ENCODE measurements at regions of chr5 and their contacts with region 1.

Region 1: DNA sequence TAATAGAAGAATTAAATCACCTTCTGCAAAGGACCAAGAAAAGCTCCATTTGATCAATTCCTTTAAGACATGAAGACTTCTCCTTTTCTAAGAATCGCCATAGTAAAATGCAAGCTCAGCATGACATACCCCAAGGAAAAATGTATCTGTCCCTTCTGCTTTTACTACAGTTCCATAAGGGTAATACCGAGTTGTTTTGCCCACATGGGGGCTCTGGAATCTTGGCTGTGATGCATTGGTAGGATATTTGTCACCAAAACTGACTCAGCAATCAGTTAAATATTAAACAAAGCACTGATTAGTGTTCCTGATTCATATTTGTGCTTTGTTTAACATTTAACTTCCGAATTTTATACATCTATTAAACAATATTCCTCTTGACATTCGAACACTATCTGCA is 24.3 kb upstream of the KCNIP1 start:
- DNase-seq: peak; percentile 71
- H3K4me3 Mint-ChIP-seq: no peak overlapping the region
- H3K27ac Mint-ChIP-seq: peak overlapping the region; percentile 56
- H3K4me1 Mint-ChIP-seq: peaks cover 44% of the 10 kb centered on the region
- H3K27me3 Mint-ChIP-seq: no peaks in the 10 kb centered on the region
- CTCF ChIP-seq: no peak

Region 2: GRCh38 chr5:169778622-169779596 is 700.6 kb before region 1 on chr5:
- CTCF ChIA-PET with region 1: no interaction called
- intact Hi-C with region 1: no loop called
- DNase-seq: no peak
- H3K4me3 Mint-ChIP-seq: no peak overlapping the region
- H3K27ac Mint-ChIP-seq: no peak overlapping the region
- H3K4me1 Mint-ChIP-seq: no peaks in the 10 kb centered on the region
- H3K27me3 Mint-ChIP-seq: peaks cover 76% of the 10 kb centered on the region
- CTCF ChIP-seq: no peak

Region 3: GRCh38 chr5:170302653-170303501 is 176.6 kb before region 1 on chr5:
- CTCF ChIA-PET with region 1: no interaction called
- intact Hi-C with region 1: no loop called
- DNase-seq: no peak
- H3K4me3 Mint-ChIP-seq: no peak overlapping the region
- H3K27ac Mint-ChIP-seq: no peak overlapping the region
- H3K4me1 Mint-ChIP-seq: peaks cover 13% of the 10 kb centered on the region
- H3K27me3 Mint-ChIP-seq: peaks cover 76% of the 10 kb centered on the region
- CTCF ChIP-seq: no peak

Region 4: GRCh38 chr5:170333161-170333910 is 146.1 kb before region 1 on chr5:
- CTCF ChIA-PET with region 1: no interaction called
- intact Hi-C with region 1: no loop called
- DNase-seq: no peak
- H3K4me3 Mint-ChIP-seq: no peak overlapping the region
- H3K27ac Mint-ChIP-seq: no peak overlapping the region
- H3K4me1 Mint-ChIP-seq: no peaks in the 10 kb centered on the region
- H3K27me3 Mint-ChIP-seq: peaks cover 31% of the 10 kb centered on the region
- CTCF ChIP-seq: no peak

Region 5: DNA sequence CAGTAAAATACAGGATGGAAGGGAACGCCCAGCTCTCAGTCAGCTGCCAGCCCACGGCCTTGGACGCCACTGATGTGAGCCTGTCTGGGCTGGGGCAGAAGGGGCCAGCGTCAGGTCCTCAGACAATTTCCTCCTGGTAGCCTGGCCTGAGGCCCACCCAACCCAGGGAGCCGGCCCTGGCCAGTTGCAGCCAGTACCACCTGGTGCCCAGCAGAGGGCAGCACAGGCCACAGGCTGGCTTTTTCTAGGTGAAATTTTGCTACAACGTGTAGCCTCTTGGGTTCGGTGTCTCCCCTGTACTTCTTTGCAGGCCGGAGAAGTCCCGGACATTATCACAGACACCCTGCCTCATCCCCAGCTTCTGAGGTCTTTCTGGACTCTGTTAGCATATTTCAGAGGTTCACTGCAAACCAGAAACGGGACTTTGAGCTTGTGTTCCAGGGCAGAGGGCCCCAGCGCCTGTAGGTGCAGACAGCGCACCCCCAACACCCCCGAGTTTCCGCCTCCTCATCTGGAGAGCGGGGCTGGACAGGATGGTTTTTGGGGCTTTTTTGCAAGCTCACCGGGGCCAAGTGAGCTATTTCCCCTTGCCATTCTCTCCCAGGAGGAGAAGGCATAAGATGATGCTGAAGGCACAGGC is 44.4 kb before region 1 on chr5:
- CTCF ChIA-PET with region 1: interaction called, 3 read pairs
- intact Hi-C with region 1: loop called (anchors 5 kb)
- DNase-seq: peak; percentile 79
- H3K4me3 Mint-ChIP-seq: no peak overlapping the region
- H3K27ac Mint-ChIP-seq: no peak overlapping the region
- H3K4me1 Mint-ChIP-seq: peaks cover 5% of the 10 kb centered on the region
- H3K27me3 Mint-ChIP-seq: peaks cover 44% of the 10 kb centered on the region
- CTCF ChIP-seq: peak; percentile 99

Region 6: DNA sequence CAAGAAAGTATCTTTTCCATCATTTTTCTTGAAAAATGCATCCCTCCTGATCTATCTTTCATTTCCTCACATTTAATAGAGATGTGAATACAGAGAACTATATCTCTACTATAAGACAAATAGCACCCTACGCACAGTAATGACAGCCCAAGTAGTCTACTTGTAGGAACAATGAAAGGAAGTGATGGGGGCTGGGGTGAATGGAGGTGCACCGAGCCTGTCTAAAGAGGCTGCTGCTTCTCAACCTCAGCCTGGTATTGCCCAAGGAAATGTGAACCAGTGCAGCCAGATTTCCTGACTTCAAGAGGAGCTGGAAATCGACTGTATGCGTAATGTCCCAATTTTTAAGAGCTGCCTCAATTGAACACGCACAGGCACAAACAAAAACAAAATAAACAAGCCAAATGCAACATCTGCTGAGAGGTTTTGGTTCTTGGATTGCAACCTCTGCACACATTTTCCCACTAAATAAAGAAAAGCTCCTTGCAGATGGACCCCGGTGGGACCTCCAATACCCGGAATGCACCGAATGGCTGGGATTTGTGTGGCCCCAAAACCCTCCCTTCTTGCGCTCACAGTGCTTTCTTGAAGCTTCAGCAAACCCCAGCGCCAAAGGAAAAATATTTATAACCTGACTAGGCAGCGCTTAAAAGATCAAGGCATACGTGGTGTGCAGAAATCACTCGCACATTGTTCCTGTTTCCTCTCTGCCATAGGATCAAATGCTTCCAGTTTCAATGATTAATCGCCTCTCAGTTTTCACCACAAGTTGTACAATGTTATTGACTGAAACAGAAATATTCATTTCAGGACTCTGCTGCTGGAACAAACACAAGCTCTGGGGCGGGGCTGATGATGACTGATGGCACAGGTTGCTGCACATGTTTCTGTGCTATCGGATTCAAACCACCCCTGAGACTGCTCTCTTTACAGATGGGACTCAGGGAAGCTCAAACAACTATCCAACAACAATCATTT is 92.7 kb after region 1 on chr5:
- CTCF ChIA-PET with region 1: interaction called, 5 read pairs
- intact Hi-C with region 1: loop called (anchors 1 kb)
- DNase-seq: peak; percentile 62
- H3K4me3 Mint-ChIP-seq: peak overlapping the region; percentile 62
- H3K27ac Mint-ChIP-seq: peak overlapping the region; percentile 23
- H3K4me1 Mint-ChIP-seq: peaks cover 31% of the 10 kb centered on the region
- H3K27me3 Mint-ChIP-seq: peaks cover 60% of the 10 kb centered on the region
- CTCF ChIP-seq: no peak